ENCODE measurements at regions of chr6 and their contacts with region 1.

Region 1: GRCh38 chr6:188821-189655 is 103.2 kb upstream of the DUSP22 start:
- DNase-seq: peak; percentile 90
- ATAC-seq: peak; percentile 95 to 97

Region 2: DNA sequence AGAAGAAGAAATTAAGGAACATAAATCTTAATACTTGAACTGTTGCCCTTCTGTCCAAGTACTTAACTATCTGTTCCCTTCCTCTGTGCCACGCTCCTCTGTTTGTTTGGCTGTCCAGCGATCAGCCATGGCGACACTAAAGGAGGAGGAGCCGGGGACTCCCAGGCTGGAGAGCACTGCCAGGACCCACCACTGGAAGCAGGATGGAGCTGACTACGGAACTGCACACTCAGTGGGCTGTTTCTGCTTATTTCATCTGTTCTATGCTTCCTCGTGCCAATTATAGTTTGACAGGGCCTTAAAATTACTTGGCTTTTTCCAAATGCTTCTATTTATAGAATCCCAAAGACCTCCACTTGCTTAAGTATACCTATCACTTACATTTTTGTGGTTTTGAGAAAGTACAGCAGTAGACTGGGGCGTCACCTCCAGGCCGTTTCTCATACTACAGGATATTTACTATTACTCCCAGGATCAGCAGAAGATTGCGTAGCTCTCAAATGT is 219.6 kb after region 1 on chr6:
- intact Hi-C with region 1: loop called in 1 of 2 experiments (anchors 2 kb)
- DNase-seq: peak; percentile 73
- ATAC-seq: peak; percentile 83 to 96

Region 3: GRCh38 chr6:551405-551804 is 362.4 kb after region 1 on chr6:
- intact Hi-C with region 1: loop called in 1 of 2 experiments (anchors 5 kb)
- DNase-seq: peak; percentile 35
- ATAC-seq: peak in 1 of 2 donors; percentile 69

Measured in left cardiac atrium (tissue), 4 donors.